Mammary epithelial cell (primary cell): ENCODE measurements at regions of chr19 and their contacts with region 1.

Region 1: GRCh38 chr19:18063463-18063862 is 23.3 kb downstream of the IL12RB1 start:
- DNase-seq: peak; percentile 40
- H3K4me3 ChIP-seq: no peak overlapping the region
- H3K27ac ChIP-seq: no peak overlapping the region
- H3K4me1 ChIP-seq: peaks cover 2% of the 10 kb centered on the region
- H3K27me3 ChIP-seq: peaks cover 2% of the 10 kb centered on the region
- CTCF ChIP-seq: peak; percentile 26 to 45

Region 2: GRCh38 chr19:17873786-17874757 is 189.4 kb before region 1 on chr19:
- CTCF ChIA-PET with region 1: no interaction called
- dilution Hi-C with region 1: no loop called
- in situ Hi-C with region 1: no loop called
- intact Hi-C with region 1: no loop called
- DNase-seq: peak; percentile 37
- H3K4me3 ChIP-seq: peak overlapping the region in 2 of 3 experiments; percentile 2 to 6
- H3K27ac ChIP-seq: no peak overlapping the region
- H3K4me1 ChIP-seq: peaks cover 5% of the 10 kb centered on the region
- H3K27me3 ChIP-seq: peaks cover 9% of the 10 kb centered on the region
- CTCF ChIP-seq: no peak

Region 3: GRCh38 chr19:18097217-18097992 is 33.9 kb after region 1 on chr19 and contains the start of gene MAST3:
- CTCF ChIA-PET with region 1: interaction called, 26 read pairs
- dilution Hi-C with region 1: no loop called
- in situ Hi-C with region 1: no loop called
- intact Hi-C with region 1: loop called (anchors 5 kb)
- DNase-seq: peak; percentile 74
- H3K4me3 ChIP-seq: peak within 1 kb of the TSS; percentile 47 to 59 (median 48)
- H3K27ac ChIP-seq: no peak within 1 kb of the TSS
- H3K4me1 ChIP-seq: peaks cover 24% of the 10 kb centered on the region
- H3K27me3 ChIP-seq: no peaks in the 10 kb centered on the region
- CTCF ChIP-seq: no peak
- total RNA-seq, gene MAST3: 3.8 to 7.0 TPM

Region 4: DNA sequence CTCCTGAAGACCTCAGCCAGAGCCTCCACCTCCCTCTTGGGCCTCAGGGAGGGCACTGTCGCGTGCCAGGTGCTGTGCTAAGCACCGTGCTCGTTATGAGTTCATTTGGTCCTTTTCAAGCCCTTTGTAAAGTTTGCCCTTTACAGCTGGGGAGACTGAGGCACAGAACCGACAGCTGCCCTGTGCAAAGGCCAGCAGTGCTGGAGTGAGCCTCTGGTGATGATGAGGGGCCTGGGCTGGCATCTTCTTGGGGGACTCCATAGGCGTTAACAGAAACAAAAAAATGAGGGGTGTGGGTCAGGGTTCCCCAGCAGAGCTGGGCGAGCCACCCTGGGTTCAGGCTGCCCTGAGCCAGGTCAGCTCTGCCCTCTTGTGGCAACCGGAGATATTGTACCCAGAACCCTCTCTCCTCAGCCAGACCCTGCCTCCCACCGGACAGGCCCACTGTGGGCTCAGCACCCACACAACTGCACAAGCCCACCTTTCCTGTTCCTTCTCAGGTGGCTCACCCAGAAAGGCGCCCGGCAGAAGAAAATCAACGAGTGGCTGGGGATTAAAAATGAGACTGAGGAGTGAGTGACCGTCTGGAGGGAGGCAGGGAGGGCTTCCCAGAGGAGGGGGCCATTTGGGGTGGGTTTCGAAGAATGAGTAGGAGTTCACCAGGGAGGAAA is 104.6 kb after region 1 on chr19:
- CTCF ChIA-PET with region 1: no interaction called
- dilution Hi-C with region 1: no loop called
- in situ Hi-C with region 1: no loop called
- intact Hi-C with region 1: loop called (anchors 5 kb)
- DNase-seq: no peak
- H3K4me3 ChIP-seq: no peak overlapping the region
- H3K27ac ChIP-seq: no peak overlapping the region
- H3K4me1 ChIP-seq: no peaks in the 10 kb centered on the region
- H3K27me3 ChIP-seq: no peaks in the 10 kb centered on the region
- CTCF ChIP-seq: peak; percentile 66 to 76

Region 5: GRCh38 chr19:18696023-18696422 is 632.6 kb after region 1 on chr19:
- CTCF ChIA-PET with region 1: no interaction called
- dilution Hi-C with region 1: no loop called
- in situ Hi-C with region 1: no loop called
- intact Hi-C with region 1: no loop called
- DNase-seq: no peak
- H3K4me3 ChIP-seq: no peak overlapping the region
- H3K27ac ChIP-seq: no peak overlapping the region
- H3K4me1 ChIP-seq: peaks cover 18% of the 10 kb centered on the region
- H3K27me3 ChIP-seq: no peaks in the 10 kb centered on the region
- CTCF ChIP-seq: no peak